ENCODE measurements at regions of chr12 and their contacts with region 1.

Region 1: GRCh38 chr12:12008931-12009611 is 61.7 kb upstream of the BCL2L14 start:
- DNase-seq: peak; percentile 64
- CTCF ChIP-seq: peak; percentile 57

Region 2: GRCh38 chr12:11998944-11999315 is 10.1 kb before region 1 on chr12:
- CTCF ChIA-PET with region 1: interaction called, 17 read pairs
- POLR2A ChIA-PET with region 1: interaction called, 6 read pairs
- DNase-seq: no peak
- CTCF ChIP-seq: no peak

Measured in GM10248 (cell line).